Activated B cell treated with CpG ODN at 0.5 μM for 24 hours (primary cell): ENCODE measurements at regions of chr9 and their contacts with region 1.

Region 1: GRCh38 chr9:90773617-90774016 is 28.0 kb upstream of the SYK start:
- DNase-seq: no peak
- ATAC-seq: peak; percentile 16
- H3K4me3 Mint-ChIP-seq: peak overlapping the region; percentile 28
- H3K27ac Mint-ChIP-seq: peak overlapping the region; percentile 65
- H3K4me1 Mint-ChIP-seq: peaks cover 65% of the 10 kb centered on the region
- H3K27me3 Mint-ChIP-seq: no peaks in the 10 kb centered on the region
- CTCF ChIP-seq: no peak

Region 2: DNA sequence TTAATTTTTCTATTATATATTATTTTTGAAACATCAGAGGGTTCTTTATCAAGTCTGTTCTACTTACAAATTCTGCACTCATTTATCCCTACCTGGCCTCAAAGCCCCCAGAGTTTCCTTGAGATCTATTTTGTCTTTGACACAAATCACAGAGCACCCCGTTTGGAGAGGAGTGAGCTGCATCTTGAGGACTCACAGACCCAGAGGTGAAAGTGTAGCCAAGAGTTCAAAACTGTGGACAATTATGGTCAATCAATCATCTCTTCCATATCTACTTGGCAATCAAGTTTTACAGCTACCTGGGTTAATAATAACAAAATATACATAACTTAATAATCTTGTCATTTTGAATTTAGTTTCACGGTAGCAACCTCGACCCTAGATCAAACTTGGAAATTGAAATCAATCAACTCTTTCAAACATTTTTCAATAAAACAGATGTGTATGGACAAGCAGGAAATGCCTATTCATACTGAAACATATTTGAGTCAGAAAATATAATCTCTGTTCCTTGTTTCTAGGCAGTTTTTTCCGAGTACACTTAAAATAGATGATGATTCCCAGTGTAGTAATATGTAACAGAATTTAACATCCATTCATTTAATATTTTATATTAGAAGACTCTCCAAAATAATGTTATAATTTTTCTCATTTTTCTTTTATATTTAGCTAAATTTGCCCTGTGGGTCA is 14.3 kb after region 1 on chr9:
- CTCF ChIA-PET with region 1: interaction called, 3 read pairs
- POLR2A ChIA-PET with region 1: interaction called, 12 read pairs
- intact Hi-C with region 1: loop called (anchors 1 kb)
- DNase-seq: no peak
- ATAC-seq: peak; percentile 53
- H3K4me3 Mint-ChIP-seq: no peak overlapping the region
- H3K27ac Mint-ChIP-seq: peak overlapping the region; percentile 66
- H3K4me1 Mint-ChIP-seq: peaks cover 42% of the 10 kb centered on the region
- H3K27me3 Mint-ChIP-seq: no peaks in the 10 kb centered on the region
- CTCF ChIP-seq: no peak

Region 3: GRCh38 chr9:90795871-90796317 is 22.3 kb after region 1 on chr9:
- CTCF ChIA-PET with region 1: interaction called, 7 read pairs
- POLR2A ChIA-PET with region 1: interaction called, 17 read pairs
- intact Hi-C with region 1: loop called (anchors 1 kb)
- DNase-seq: no peak
- ATAC-seq: peak; percentile 56
- H3K4me3 Mint-ChIP-seq: peak overlapping the region; percentile 50
- H3K27ac Mint-ChIP-seq: peak overlapping the region; percentile 89
- H3K4me1 Mint-ChIP-seq: peaks cover 72% of the 10 kb centered on the region
- H3K27me3 Mint-ChIP-seq: no peaks in the 10 kb centered on the region
- CTCF ChIP-seq: no peak

Region 4: GRCh38 chr9:90838100-90838499 is 64.5 kb after region 1 on chr9:
- CTCF ChIA-PET with region 1: interaction called, 6 read pairs
- POLR2A ChIA-PET with region 1: interaction called, 12 read pairs
- intact Hi-C with region 1: loop called (anchors 1 kb)
- DNase-seq: no peak
- ATAC-seq: no peak
- H3K4me3 Mint-ChIP-seq: peak overlapping the region; percentile 36
- H3K27ac Mint-ChIP-seq: no peak overlapping the region
- H3K4me1 Mint-ChIP-seq: peaks cover 69% of the 10 kb centered on the region
- H3K27me3 Mint-ChIP-seq: no peaks in the 10 kb centered on the region
- CTCF ChIP-seq: no peak

Region 5: DNA sequence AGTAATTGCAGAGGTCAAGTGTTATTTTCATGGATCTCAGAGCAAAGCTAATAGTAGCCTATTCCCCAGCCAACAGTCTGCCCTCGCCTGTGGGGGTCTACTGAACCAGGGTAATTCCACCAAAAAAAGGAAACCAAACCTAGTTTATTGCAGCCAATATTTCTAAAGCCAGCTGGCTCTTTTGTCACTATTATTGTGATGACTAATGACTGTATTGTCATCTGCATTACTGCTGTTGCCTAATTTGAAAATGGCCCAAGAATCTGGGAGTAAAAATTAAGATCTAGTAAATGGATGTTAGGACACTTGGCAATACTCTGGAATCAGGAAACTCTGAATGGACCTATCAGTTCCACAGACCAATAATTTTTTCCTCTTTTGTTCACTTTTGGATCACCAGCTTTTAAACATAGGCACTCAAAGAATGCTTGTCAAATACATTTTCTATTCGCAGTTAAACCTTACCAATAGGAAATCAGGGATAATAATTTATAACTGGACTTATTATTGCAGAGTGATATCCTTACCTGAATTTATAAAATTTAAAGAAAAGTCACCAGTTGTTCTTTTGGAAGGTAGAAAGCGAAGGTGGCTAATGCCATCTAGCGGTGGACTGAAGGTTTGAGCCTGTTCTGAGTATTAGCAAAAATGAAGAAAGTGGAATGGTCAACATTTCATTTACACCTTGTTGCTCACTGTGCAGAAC is 97.2 kb after region 1 on chr9:
- CTCF ChIA-PET with region 1: interaction called, 4 read pairs
- POLR2A ChIA-PET with region 1: interaction called, 3 read pairs
- intact Hi-C with region 1: loop called (anchors 1 kb)
- DNase-seq: no peak
- ATAC-seq: no peak
- H3K4me3 Mint-ChIP-seq: no peak overlapping the region
- H3K27ac Mint-ChIP-seq: peak overlapping the region; percentile 74
- H3K4me1 Mint-ChIP-seq: peaks cover 4% of the 10 kb centered on the region
- H3K27me3 Mint-ChIP-seq: no peaks in the 10 kb centered on the region
- CTCF ChIP-seq: peak; percentile 97